Activated T-helper 2 cell treated with anti-CD3 and anti-CD28 coated beads, Interferon-gamma antibody, Interleukin-2, Interleukin-4, amounts not matched to agents 10 μg/mL and 5 μg/mL and 100 μg/mL, durations not matched to agents 14 hours and 24 hours and 36 hours (primary cell): ENCODE measurements at regions of chr19 and their contacts with region 1.

Region 1: GRCh38 chr19:6516659-6517291 is 14.1 kb upstream of the TNFSF9 start:
- DNase-seq: peak; percentile 85
- H3K4me3 Mint-ChIP-seq: peak overlapping the region; percentile 94
- H3K27ac Mint-ChIP-seq: peak overlapping the region; percentile 94
- H3K4me1 Mint-ChIP-seq: peaks cover 31% of the 10 kb centered on the region
- H3K27me3 Mint-ChIP-seq: no peaks in the 10 kb centered on the region

Region 2: GRCh38 chr19:6530386-6531161 is 13.8 kb after region 1 on chr19 and contains the start of gene TNFSF9:
- intact Hi-C with region 1: loop called (anchors 2 kb)
- DNase-seq: peak; percentile 78
- H3K4me3 Mint-ChIP-seq: peak within 1 kb of the TSS; percentile 85
- H3K27ac Mint-ChIP-seq: peak within 1 kb of the TSS; percentile 35
- H3K4me1 Mint-ChIP-seq: peaks cover 23% of the 10 kb centered on the region
- H3K27me3 Mint-ChIP-seq: peaks cover 27% of the 10 kb centered on the region
- total RNA-seq, gene TNFSF9: 6.9 and 7.4 TPM in 2 replicates

Region 3: DNA sequence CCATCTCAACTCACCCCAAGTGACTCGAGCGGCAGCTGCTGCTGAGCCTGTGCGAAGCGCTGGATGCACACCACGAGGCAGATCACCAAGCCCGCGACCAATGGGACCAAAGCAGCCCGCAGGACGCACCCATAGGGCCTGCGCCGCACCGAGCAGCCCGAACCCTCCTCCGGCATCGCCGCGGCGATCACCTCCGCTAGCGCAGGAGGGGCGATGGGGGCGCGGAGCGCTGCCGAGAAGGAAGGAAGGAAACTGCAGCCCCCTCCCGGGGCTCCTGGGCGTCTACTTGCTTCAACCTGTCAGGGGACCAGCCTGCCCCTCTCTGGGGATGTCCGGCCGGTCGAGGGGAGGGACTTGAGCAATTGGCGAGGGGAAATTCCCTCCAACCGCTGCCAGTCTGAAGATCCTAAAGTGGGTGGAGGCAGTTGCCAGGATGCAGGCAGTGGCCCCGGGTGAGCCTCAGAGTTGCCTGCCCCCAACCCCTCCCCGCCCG is 74.1 kb after region 1 on chr19 and contains the start of gene CD70:
- intact Hi-C with region 1: loop called (anchors 2 kb)
- DNase-seq: peak; percentile 65
- H3K4me3 Mint-ChIP-seq: peak within 1 kb of the TSS; percentile 99
- H3K27ac Mint-ChIP-seq: peak within 1 kb of the TSS; percentile 89
- H3K4me1 Mint-ChIP-seq: peaks cover 59% of the 10 kb centered on the region
- H3K27me3 Mint-ChIP-seq: peaks cover 31% of the 10 kb centered on the region
- total RNA-seq, gene CD70: 85.5 and 88.7 TPM in 2 replicates

Region 4: GRCh38 chr19:6632002-6632621 is 115.3 kb after region 1 on chr19:
- intact Hi-C with region 1: loop called (anchors 1 kb)
- DNase-seq: peak; percentile 71
- H3K4me3 Mint-ChIP-seq: no peak overlapping the region
- H3K27ac Mint-ChIP-seq: no peak overlapping the region
- H3K4me1 Mint-ChIP-seq: peaks cover 25% of the 10 kb centered on the region
- H3K27me3 Mint-ChIP-seq: peaks cover 2% of the 10 kb centered on the region

Region 5: GRCh38 chr19:6737284-6738046 is 220.7 kb after region 1 on chr19 and contains the start of gene GPR108:
- intact Hi-C with region 1: loop called (anchors 1 kb)
- DNase-seq: peak; percentile 100
- H3K4me3 Mint-ChIP-seq: peak within 1 kb of the TSS; percentile 98
- H3K27ac Mint-ChIP-seq: peak within 1 kb of the TSS; percentile 98
- H3K4me1 Mint-ChIP-seq: peaks cover 37% of the 10 kb centered on the region
- H3K27me3 Mint-ChIP-seq: no peaks in the 10 kb centered on the region
- total RNA-seq, gene GPR108: 90.4 and 95.4 TPM in 2 replicates

Region 6: DNA sequence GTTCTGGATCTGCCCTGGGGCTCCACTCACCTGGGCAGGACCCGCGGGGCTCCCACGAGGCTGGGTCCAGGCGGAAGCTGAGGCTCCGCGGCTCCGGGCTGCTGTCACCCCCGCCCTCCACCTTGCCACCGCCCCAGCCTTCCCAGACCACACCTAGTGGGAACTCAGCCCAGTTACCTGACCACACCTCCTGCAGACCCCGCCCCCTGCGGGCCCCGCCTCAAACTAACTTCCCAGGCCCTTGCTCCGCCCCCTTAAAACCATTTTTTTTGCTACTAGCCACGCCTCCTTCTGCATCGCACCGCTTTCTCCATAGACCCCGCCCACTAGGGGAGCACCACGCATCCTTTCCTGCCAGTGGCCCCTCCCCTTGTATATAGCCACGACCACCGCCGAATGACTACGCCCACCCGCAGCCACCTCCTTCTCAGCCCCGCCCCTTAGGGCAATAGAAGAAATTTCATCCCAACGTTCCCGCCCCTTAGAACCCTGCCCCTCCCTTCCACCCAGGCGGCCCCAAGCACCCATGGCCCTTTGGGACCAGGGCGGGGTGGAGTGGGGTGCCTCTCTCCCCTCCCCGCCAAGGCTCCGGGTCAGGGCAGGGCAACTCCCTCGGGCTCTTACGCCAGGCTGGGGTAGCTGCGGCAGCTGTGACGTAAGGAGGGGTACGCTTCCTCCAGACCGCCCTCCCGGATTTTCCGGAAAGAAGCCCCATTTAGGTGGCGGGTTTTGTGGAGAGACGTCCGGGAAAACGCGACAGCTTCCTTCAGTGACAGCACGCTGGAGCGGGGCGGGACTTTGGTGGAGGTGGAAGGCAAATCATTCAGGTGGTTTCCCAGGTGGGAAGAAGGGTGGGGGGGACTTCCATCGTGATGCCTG is 250.8 kb after region 1 on chr19 and contains the start of gene SH2D3A:
- intact Hi-C with region 1: loop called (anchors 5 kb)
- DNase-seq: peak; percentile 92
- H3K4me3 Mint-ChIP-seq: peak within 1 kb of the TSS; percentile 89
- H3K27ac Mint-ChIP-seq: peak within 1 kb of the TSS; percentile 91
- H3K4me1 Mint-ChIP-seq: peaks cover 33% of the 10 kb centered on the region
- H3K27me3 Mint-ChIP-seq: no peaks in the 10 kb centered on the region
- total RNA-seq, gene SH2D3A: 7.7 and 8.7 TPM in 2 replicates